Thyroid gland (tissue), 4 donors: ENCODE measurements at regions of chr15 and their contacts with region 1.

Region 1: GRCh38 chr15:68550481-68551295 is 28.1 kb upstream of the CORO2B start:
- DNase-seq: peak; percentile 82 to 84
- H3K4me3 ChIP-seq: no peak overlapping the region
- H3K27ac ChIP-seq: no peak overlapping the region
- H3K4me1 ChIP-seq: no peaks in the 10 kb centered on the region
- H3K27me3 ChIP-seq: no peaks in the 10 kb centered on the region
- CTCF ChIP-seq: peak; percentile 78 to 93 (median 88)
- POLR2A ChIP-seq: no peak

Region 2: DNA sequence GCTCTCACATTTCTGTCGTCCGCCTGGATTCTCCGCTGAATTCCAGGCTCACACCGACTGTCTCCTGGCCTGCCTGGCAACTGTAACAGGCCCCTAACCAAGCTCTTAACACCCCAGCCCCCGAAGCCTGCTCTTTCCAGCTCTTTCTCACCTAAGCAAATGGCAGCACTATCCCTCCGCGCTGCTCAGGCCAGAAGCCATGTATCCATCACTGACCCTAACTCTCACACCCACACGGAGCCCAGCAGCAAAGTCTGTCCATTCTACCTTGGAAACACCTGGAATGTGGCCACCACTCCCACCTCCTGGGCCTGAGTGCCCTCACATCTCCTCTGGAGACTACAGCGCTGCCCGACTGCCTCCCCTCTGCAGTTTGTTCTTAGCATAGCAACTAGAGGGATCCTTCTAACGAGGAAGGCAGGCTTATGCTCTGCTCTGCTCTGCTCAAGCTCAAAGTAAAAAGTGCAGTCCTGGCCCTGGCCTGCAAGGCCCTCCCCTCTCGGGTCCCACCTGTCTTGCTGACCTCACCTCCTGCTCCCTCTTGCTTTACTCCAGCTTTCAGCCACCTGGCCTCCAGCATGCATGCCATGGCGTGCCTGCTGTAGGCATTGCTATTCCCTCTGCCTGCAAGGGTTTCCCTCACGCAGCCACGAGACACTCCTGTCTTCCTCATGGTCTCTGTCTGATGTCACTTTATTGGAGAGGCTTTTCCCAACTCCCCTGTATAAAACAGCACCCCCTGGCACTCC is 245.9 kb before region 1 on chr15:
- intact Hi-C with region 1: loop called (anchors 5 kb)
- DNase-seq: no peak
- H3K4me3 ChIP-seq: no peak overlapping the region
- H3K27ac ChIP-seq: no peak overlapping the region
- H3K4me1 ChIP-seq: peaks cover under 1 to 11% of the 10 kb centered on the region in 2 donors
- H3K27me3 ChIP-seq: no peaks in the 10 kb centered on the region
- CTCF ChIP-seq: no peak
- POLR2A ChIP-seq: no peak

Region 3: GRCh38 chr15:68672781-68673205 is 122.1 kb after region 1 on chr15:
- intact Hi-C with region 1: loop called (anchors 2 kb)
- DNase-seq: no peak
- H3K4me3 ChIP-seq: no peak overlapping the region
- H3K27ac ChIP-seq: no peak overlapping the region
- H3K4me1 ChIP-seq: no peaks in the 10 kb centered on the region
- H3K27me3 ChIP-seq: no peaks in the 10 kb centered on the region
- CTCF ChIP-seq: no peak
- POLR2A ChIP-seq: no peak

Region 4: GRCh38 chr15:68875377-68876116 is 324.9 kb after region 1 on chr15:
- intact Hi-C with region 1: loop called (anchors 5 kb)
- DNase-seq: peak; percentile 93 to 97
- H3K4me3 ChIP-seq: no peak overlapping the region
- H3K27ac ChIP-seq: no peak overlapping the region
- H3K4me1 ChIP-seq: peaks cover 0 to 5% of the 10 kb centered on the region in 2 donors
- H3K27me3 ChIP-seq: no peaks in the 10 kb centered on the region
- CTCF ChIP-seq: peak; percentile 78 to 93 (median 86)
- POLR2A ChIP-seq: no peak